ENCODE measurements at regions of chr15 and their contacts with region 1.

Region 1: GRCh38 chr15:101479866-101480612 is 9.5 kb downstream of the PCSK6 start:
- DNase-seq: peak in 8 of 10 donors; percentile 70 to 97 (median 86)

Region 2: DNA sequence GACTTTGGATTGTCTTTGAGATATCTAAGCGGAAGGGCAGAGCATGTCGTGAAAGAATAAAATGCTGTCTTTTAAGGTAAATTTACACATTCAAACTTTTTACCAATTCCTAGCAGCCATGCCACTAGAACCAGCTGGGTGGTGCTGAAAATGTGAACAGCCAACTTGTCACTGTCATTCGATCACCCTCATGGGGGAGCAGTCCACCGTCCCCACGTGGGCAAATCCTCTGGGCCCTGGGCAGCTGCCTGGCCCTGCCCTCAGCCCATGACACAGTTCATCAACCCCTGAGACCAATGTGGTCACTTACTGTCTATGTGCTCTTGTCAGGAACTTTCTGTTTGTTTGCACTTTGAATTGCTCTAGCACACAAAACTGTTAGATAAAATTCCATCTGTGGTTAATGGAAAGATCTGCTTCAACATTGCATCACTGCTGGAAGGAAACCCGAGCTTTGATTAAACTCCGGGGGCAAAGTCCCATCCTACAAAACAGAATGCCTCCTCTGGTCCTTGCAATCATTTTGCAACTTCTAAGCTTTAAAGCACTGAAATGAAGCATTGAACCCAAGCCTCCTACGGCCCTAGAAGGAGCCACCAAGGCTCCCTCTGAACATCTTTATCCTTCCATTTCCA is 40.6 kb before region 1 on chr15:
- intact Hi-C with region 1: loop called (anchors 5 kb)
- DNase-seq: no peak

Region 3: DNA sequence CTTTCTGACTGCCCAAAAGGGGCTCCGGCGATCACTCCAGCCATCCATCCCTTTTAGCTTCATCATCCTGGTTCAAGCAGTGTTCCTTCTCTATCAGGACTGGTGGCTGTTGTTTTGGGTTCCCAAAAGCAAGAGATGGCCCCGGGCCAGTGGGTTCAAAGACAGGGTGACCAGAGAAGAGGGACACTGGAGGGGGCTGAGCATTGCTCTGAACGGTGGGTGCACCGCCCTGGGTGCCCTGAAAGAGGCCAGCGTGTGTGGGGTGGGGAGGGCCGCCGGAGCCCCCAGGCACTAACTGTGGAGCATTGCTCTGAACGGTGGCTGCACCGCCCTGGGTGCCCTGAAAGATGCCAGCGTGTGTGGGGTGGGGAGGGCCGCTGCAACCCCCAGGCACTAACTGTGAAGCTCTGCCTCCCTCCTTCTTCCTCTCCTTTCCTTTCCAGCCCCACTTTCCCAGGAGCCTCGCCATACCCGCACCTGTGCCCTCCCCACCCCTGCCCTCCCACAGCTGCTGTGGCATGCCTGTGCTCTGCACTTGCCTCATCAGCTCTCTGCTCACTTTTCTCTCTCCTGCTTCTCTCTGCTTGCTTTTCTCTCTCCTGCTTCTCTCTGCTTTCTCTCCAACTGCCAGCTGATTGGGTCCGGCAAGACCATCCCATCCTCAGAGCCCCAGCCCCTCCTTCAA is 285.9 kb after region 1 on chr15:
- intact Hi-C with region 1: no loop called
- DNase-seq: peak in 1 of 10 donors; percentile 44